ENCODE measurements at regions of chr3 and their contacts with region 1.

Region 1: GRCh38 chr3:171459942-171460724 is at the start of gene TNIK:
- DNase-seq: peak; percentile 87 to 97 (median 96)
- H3K4me3 ChIP-seq: peak within 1 kb of the TSS; percentile 58 to 97 (median 84)
- H3K27ac ChIP-seq: peak within 1 kb of the TSS; percentile 32 to 94 (median 87)
- H3K27me3 ChIP-seq: no peaks in the 10 kb centered on the region
- CTCF ChIP-seq: peak in 4 of 56 donors; percentile 3 to 31 (median 13)
- total RNA-seq, gene TNIK: 63.1 to 191 (median 103) TPM

Region 2: DNA sequence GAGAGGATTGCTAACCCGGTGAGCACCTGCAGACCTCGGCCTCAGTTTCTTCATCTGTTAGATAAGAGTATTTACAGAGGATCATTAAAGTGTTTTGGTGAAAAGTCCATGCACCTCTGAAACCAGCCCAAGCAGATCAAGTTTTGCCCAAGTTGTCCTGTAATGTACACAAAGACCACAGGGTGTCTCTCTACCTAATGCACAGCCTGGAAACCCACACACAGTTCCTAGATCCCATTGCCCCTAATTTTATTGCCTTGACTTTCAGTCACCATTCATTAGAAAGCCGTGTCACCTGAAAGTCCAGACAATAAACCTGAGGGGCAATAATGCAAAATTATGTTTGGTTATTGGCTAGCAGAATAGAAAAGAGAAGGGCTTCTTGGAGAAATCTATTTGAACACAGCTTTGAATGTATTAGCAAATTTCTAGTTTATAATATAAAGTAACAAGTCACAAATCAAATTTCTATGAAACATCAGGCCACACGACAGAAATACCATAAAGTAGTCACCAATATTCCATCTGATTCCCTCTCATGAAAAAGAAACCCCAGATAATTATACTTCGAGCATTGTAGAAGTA is 272.3 kb before region 1 on chr3:
- intact Hi-C with region 1: loop called (anchors 5 kb)
- DNase-seq: no peak
- H3K4me3 ChIP-seq: no peak overlapping the region
- H3K27ac ChIP-seq: peak overlapping the region in 2 of 59 donors; percentile 29 to 38
- H3K27me3 ChIP-seq: no peaks in the 10 kb centered on the region
- CTCF ChIP-seq: peak; percentile 35 to 87 (median 73)

Region 3: GRCh38 chr3:171347301-171348039 is 112.7 kb before region 1 on chr3:
- intact Hi-C with region 1: loop called (anchors 10 kb)
- DNase-seq: no peak
- H3K4me3 ChIP-seq: peak overlapping the region in 3 of 59 donors; percentile 2 to 22 (median 17)
- H3K27ac ChIP-seq: peak overlapping the region in 53 of 59 donors; percentile 8 to 81 (median 62)
- H3K27me3 ChIP-seq: no peaks in the 10 kb centered on the region
- CTCF ChIP-seq: no peak

Region 4: DNA sequence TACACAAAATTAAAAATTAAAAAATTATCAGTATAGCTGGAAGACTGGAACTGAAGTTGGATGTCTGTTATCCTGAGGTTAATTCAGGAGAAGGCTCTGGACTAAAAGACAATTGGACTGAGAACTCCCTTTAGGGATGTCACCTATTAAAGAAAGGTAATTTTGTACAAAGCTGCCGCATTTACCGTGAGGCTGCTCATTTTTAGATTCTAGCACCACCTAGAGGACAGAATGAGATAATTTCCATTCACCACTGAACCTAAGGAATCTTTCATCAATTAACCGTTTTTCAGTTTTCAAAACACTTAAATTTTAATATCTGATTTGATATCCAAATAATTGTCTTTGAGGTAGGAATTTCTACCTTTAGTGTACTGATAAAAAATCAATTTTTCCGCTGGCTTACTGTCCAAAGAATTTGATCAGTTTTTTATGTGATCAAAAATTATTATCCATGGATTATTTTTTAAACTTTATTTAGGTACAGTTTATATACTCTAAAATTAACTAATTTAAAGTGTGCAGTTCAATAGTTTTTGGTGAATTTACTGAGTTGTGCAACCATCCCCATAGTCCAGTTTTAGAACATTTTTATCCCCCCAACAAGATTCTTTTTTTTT is 106.8 kb after region 1 on chr3:
- intact Hi-C with region 1: loop called (anchors 5 to 10 kb)
- DNase-seq: no peak
- H3K4me3 ChIP-seq: no peak overlapping the region
- H3K27ac ChIP-seq: no peak overlapping the region
- H3K27me3 ChIP-seq: no peaks in the 10 kb centered on the region
- CTCF ChIP-seq: peak; percentile 58 to 98 (median 87)

Region 5: DNA sequence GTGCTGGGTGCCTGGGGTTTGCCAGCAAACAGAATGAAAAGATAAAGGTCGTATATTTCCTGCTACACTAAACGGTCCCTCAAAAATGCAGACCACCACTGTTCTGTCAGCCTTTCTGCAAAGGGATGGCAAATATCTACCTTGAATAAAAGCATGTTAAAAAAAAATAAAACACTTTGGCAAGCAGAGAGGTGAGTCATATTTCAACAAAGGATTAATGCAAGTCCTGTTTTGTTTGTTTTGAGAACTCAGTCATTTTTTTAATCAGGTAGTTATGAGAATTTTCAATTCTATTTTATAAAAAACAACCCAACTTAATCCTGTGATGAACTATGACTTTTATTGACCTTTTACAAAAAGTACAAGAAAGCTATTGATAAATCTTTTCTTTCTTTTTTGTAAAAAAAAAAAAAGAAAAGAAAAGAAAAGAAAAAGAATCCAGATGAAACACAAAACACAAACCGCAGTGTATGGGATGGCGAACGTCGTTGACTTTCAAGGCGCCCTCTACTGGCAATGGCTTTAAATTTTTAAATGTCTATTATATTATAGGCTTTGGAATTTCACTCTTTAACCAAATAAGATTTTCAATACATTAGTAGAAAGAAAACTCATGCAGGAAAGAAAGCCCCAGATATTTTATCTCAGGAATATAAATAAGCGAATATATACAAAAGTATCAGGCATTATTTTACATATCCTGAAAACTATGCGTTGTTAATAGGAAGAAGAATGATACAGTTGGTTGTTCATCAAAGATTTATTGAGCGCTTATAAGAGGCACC is 1163.0 kb after region 1 on chr3:
- intact Hi-C with region 1: no loop called
- DNase-seq: no peak
- H3K4me3 ChIP-seq: no peak overlapping the region
- H3K27ac ChIP-seq: no peak overlapping the region
- H3K27me3 ChIP-seq: no peaks in the 10 kb centered on the region
- CTCF ChIP-seq: peak; percentile 44 to 75 (median 59)

Measured in dorsolateral prefrontal cortex (tissue), 120 donors.